ENCODE measurements at regions of chr1 and their contacts with region 1.

Region 1: GRCh38 chr1:114282751-114283403 is 129.2 kb upstream of the SYT6 start:
- DNase-seq: peak; percentile 89
- ATAC-seq: peak; percentile 97 to 98

Region 2: DNA sequence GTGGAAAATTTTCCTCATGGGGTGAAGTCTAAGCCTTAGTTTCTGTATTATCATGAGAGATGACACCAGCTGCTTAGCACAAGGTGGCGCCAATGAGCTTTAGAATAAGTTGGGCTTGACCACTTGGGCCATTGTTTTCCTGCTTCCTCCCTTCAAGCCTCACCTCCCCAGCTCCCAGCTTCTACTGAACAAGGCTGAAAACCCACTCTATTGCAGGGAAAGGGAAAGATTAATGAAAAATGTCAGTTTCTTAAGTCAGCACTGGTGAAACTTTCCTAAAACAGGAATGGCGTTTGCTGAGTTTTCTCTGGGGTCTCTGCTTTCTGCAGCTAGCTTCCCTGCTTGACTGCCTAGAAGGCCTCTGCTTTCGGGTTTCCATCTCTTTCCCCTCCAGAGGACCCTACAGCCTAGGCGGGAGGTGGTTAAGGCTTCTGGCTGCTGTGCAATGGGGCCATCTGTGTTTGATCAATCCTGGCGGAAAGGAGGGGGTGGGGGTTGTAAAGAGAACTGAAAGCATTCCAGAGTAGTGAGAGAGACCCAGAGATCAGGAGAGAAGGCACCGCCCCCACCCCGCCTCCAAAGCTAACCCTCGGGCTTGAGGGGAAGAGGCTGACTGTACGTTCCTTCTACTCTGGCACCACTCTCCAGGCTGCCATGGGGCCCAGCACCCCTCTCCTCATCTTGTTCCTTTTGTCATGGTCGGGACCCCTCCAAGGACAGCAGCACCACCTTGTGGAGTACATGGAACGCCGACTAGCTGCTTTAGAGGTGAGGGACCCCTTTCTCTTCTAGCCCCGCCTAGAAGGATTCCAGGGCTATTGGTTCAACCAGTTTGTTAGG is 303.8 kb before region 1 on chr1 and contains the start of gene OLFML3:
- intact Hi-C with region 1: loop called (anchors 1 to 5 kb)
- DNase-seq: peak; percentile 90
- ATAC-seq: peak; percentile 68 to 82
- total RNA-seq, gene OLFML3: 18.8 to 36.2 TPM

Measured in left cardiac atrium (tissue), 4 donors.